ENCODE measurements at regions of chr5 and their contacts with region 1.

Region 1: GRCh38 chr5:85225388-85225787 is 840.7 kb upstream of the EDIL3 start:
- DNase-seq: no peak
- ATAC-seq: no peak
- H3K4me3 ChIP-seq: no peak overlapping the region
- H3K27ac ChIP-seq: no peak overlapping the region
- H3K4me1 ChIP-seq: no peaks in the 10 kb centered on the region
- H3K27me3 ChIP-seq: 0 out of 2 replicates have a peak, but pooled peaks cover 5% of the 10 kb centered on the region
- CTCF ChIP-seq: no peak

Region 2: GRCh38 chr5:85249204-85249603 is 23.8 kb after region 1 on chr5:
- CTCF ChIA-PET with region 1: no interaction called
- POLR2A ChIA-PET with region 1: no interaction called
- intact Hi-C with region 1: loop called (anchors 1 kb)
- DNase-seq: no peak
- ATAC-seq: no peak
- H3K4me3 ChIP-seq: no peak overlapping the region
- H3K27ac ChIP-seq: no peak overlapping the region
- H3K4me1 ChIP-seq: no peaks in the 10 kb centered on the region
- H3K27me3 ChIP-seq: no peaks in the 10 kb centered on the region
- CTCF ChIP-seq: no peak

Region 3: DNA sequence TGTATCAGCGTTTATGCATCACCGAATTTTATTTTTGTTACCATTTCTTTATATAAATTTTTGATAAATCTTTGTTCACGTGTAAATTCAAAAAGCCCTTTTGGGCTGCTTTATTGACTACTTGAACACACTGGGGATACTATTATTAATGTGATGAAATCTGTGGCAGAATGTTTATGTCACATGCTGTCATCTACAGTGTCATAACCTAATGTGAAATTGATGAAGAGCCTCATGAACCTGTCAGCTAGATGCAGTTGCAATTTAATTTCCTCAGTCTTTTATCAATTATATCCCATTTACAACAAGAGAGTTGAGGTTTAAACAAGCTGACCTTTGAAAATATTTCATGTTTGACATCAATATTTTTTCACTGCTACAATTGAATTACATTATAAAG is 292.0 kb after region 1 on chr5:
- CTCF ChIA-PET with region 1: no interaction called
- POLR2A ChIA-PET with region 1: no interaction called
- intact Hi-C with region 1: no loop called
- DNase-seq: no peak
- ATAC-seq: no peak
- H3K4me3 ChIP-seq: no peak overlapping the region
- H3K27ac ChIP-seq: no peak overlapping the region
- H3K4me1 ChIP-seq: no peaks in the 10 kb centered on the region
- H3K27me3 ChIP-seq: peaks cover 12% of the 10 kb centered on the region; the same call in 1 of the 2 replicates
- CTCF ChIP-seq: no peak

Measured in PC-3 (cell line).